Cardiac septum (tissue), 1 donor: ENCODE measurements at regions of chr4 and their contacts with region 1.

Region 1: DNA sequence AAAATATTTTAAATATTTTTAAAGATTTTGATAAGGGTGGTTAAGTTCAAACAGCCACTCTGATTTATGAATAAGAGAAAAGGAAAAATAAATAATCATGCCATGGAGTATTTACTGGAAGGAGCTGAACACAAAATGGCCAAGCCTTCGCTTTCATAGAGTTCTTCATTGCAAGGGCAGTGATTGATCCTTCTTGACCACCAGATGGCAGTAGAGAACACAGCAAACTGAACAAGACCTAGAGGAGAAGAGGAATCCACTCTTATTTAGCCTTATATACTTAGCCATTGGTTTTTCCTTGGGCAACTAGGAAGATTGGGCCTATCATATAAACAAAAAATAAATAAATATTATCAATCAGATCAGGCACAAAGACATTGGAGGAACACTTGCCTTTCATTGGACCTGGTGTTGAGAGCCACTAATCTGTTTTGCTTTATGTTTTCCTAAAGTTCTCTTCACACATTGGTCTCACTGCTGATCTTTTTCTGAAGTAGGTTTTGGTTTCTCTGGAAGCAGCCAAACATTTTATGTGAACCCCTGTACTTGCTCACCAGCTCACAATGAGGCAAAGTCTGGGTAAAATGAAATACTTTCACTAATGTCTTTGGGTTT is 58.1 kb upstream of the PARM1 start:
- DNase-seq: no peak

Region 2: GRCh38 chr4:74724979-74725378 is 149.9 kb before region 1 on chr4:
- intact Hi-C with region 1: no loop called
- DNase-seq: no peak

Region 3: GRCh38 chr4:75118739-75119138 is 243.9 kb after region 1 on chr4:
- intact Hi-C with region 1: loop called (anchors 5 kb)
- DNase-seq: no peak

Region 4: DNA sequence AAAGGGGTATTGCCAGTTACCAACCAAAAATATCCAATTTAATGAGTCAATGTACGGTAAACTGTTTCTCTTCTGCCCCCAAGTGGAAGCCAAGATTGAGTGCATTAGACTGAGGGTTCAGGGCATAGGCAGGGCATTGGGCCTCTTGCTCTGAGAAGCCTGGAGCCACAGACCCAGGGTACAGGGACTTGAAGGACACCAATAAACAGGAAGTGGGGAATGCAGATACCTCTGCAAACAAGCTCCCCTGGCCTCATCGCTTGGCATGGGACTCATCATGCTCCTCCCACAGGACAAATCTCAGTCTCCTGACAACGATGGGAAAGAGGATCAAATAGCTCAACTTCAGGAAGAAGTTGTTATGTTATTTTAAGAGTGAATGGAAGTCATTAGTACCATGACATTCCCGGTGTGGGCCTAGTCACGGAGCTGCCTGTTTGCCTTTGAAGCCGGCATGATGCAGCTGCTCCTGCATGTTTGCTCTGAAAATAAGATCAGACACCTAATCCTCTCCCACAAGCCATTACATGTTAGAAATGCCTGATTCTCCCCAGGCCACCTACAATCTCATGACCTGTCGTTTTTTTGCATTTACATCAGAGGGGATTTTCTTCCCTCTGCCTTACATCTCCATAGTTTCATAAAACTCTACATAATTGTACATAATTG is 415.2 kb after region 1 on chr4:
- intact Hi-C with region 1: loop called (anchors 10 kb)
- DNase-seq: no peak

Region 5: DNA sequence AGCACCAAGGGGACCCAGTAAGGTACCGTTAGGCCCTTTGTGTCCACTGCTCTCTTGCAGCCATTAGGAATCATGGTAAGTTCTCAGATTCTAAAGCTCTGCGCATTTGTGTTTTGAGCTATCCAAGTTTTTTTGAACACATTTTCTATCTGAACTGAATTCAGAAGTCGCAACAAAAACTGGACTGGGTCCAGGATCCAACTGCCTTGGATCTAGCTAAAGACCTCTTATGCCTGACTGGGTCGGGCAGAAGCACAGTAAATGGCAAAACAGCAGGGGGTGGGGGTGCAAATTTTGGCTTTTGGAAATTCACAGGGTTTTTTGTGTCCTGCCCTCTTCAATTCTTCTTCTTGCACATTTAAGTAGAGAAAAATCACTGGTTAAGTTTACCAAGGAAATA is 609.3 kb after region 1 on chr4:
- intact Hi-C with region 1: loop called (anchors 10 kb)
- DNase-seq: no peak